Endothelial cell of umbilical vein (primary cell): ENCODE measurements at regions of chr2 and their contacts with region 1.

Region 1: DNA sequence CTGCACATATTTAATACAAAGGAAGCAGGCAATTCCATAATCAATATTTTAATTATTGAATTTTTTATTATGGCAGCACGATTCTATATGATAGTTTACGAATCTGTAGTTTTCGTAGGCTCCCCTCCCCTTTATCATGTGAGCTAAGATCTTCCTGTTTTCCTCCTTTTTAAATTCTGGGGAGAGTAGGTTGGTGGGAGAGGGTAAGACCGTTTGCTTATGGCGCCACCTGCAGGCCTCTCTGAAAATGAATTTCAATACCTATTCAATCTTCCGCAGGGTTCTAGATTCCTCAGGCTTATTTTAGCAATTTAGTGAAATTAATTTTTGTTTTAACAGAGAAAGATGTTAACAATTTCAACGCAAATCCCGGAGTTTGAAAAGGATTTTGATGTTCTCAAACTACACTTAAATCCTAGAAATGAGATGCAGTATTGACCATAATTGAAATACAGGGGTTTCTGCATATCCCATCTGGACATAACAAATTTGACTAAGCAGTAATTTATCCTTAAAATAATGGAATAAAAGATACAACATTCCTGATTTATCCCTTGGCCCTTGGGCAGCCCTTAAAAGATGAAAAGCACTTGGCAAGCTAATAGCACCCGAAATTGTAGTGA is 12.8 kb upstream of the GBX2 start:
- DNase-seq: peak; percentile 88
- H3K4me3 ChIP-seq: peak overlapping the region in 1 of 3 experiments; percentile 65
- H3K27ac ChIP-seq: peak overlapping the region; percentile 99
- H3K4me1 ChIP-seq: peaks cover 24% of the 10 kb centered on the region
- H3K27me3 ChIP-seq: no peaks in the 10 kb centered on the region
- CTCF ChIP-seq: peak; percentile 61 to 65
- POLR2A ChIP-seq: no peak

Region 2: DNA sequence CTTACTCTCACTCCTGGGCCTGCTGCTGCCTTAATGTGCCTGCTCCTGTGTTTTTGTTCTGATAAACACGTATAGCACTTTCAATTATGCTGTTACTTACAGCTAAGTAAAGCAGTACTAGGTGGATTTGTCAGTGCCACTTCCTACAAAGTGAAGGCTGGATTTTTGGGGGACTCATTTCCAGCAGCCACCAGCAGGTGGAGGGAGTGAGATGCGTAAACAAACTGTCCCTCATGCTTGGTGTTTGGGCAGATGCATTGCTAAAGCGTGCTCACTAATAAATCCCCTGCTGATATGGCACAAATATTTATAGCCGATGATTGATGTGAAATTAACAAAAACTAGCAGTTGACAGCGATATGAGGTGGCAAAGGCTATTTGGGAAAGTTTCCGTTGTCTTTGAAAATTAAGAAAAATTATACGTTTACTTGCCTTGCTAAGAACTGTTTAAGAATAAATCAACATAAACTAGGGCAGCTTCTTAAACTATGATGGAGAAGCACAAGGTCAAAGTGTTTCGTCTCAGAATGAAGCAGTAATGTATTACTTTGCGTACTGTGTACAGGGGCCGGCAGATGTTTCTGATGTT is 585.4 kb before region 1 on chr2:
- CTCF ChIA-PET with region 1: no interaction called
- POLR2A ChIA-PET with region 1: no interaction called
- dilution Hi-C with region 1: no loop called
- intact Hi-C with region 1: loop called (anchors 1 kb)
- DNase-seq: peak; percentile 85
- H3K4me3 ChIP-seq: no peak overlapping the region
- H3K27ac ChIP-seq: no peak overlapping the region
- H3K4me1 ChIP-seq: peaks cover 3% of the 10 kb centered on the region
- H3K27me3 ChIP-seq: no peaks in the 10 kb centered on the region
- CTCF ChIP-seq: peak; percentile 83
- POLR2A ChIP-seq: no peak

Region 3: DNA sequence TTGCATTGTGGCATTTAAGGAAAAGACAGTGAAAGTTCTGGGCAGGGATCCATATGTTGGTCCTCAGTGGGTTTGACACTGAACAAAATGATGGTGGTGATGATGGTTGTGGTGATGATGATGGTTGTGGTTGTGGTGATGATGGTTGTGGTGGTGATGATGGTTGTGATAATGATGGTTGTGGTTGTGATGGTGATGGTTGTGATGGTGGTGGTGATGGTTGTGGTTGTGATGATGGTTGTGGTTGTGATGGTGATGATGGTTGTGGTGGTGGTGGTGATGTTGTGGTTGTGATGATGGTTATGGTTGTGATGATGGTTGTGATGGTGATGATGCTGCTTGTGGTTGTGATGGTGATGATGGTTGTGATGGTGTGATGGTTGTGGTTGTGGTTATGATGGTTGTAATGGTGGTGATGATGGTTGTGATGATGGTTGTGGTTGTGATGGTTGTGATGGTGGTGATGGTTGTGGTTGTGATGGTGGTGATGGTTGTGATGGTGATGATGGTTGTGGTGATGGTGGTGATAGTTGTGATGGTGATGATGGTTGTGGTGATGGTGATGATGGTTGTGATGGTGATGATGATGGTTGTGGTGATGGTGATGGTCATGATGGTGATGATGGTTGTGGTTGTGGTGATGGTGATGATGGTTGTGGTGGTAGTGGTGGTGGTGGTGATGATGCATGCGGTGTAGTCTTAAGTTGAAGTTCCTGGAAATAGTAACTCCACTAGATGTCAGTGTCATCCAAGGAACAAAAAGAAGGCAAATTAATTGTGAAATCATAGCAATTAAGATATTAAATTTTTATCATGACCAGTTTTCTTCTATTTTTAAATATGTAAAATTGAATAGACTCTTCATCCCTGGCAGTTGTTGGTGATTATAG is 378.2 kb before region 1 on chr2:
- CTCF ChIA-PET with region 1: interaction called, 22 read pairs
- POLR2A ChIA-PET with region 1: no interaction called
- dilution Hi-C with region 1: no loop called
- intact Hi-C with region 1: loop called (anchors 1 kb)
- DNase-seq: peak; percentile 43
- H3K4me3 ChIP-seq: no peak overlapping the region
- H3K27ac ChIP-seq: no peak overlapping the region
- H3K4me1 ChIP-seq: no peaks in the 10 kb centered on the region
- H3K27me3 ChIP-seq: no peaks in the 10 kb centered on the region
- CTCF ChIP-seq: peak; percentile 9 to 18
- POLR2A ChIP-seq: no peak

Region 4: GRCh38 chr2:235981631-235982030 is 199.3 kb before region 1 on chr2:
- CTCF ChIA-PET with region 1: interaction called, 3 read pairs
- POLR2A ChIA-PET with region 1: no interaction called
- dilution Hi-C with region 1: no loop called
- intact Hi-C with region 1: loop called (anchors 1 kb)
- DNase-seq: peak; percentile 34
- H3K4me3 ChIP-seq: no peak overlapping the region
- H3K27ac ChIP-seq: no peak overlapping the region
- H3K4me1 ChIP-seq: no peaks in the 10 kb centered on the region
- H3K27me3 ChIP-seq: no peaks in the 10 kb centered on the region
- CTCF ChIP-seq: peak in 1 of 2 donors; percentile 34
- POLR2A ChIP-seq: no peak

Region 5: DNA sequence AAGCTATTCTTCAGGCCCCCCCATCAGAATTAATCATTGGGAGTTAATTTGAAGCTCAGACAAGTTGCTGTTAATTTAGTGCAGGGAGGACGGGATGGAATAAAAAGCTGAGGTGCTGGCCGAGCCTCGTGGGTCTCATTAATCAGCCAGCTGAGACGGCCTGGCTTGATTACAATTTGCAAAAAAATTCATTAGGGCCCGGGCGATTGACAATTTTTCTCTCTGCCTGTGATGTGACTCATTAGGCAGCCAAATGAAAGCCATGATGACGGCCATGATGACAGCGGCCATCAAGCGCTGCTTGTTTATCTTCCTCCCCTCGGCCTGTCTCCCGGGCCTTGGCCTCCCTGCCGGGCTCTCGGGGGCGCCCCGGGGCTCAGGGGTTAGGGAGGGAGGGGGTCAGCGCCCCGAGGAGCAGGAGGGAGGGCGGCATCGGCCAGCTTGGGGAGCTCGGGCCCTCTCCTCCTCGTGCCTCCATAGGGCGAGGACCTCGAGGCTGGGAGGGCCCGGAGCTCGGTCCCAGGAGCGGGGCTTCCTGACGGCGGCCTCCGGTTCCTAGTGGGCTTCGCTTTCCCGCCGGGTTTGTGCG is 18.0 kb before region 1 on chr2:
- CTCF ChIA-PET with region 1: interaction called, 61 read pairs
- POLR2A ChIA-PET with region 1: interaction called, 9 read pairs
- dilution Hi-C with region 1: no loop called
- intact Hi-C with region 1: loop called (anchors 1 kb)
- DNase-seq: no peak
- H3K4me3 ChIP-seq: peak overlapping the region in 1 of 3 experiments; percentile 73
- H3K27ac ChIP-seq: no peak overlapping the region
- H3K4me1 ChIP-seq: peaks cover 16% of the 10 kb centered on the region
- H3K27me3 ChIP-seq: peaks cover 0 to 10% of the 10 kb centered on the region in 2 experiments
- CTCF ChIP-seq: no peak
- POLR2A ChIP-seq: peak; percentile 5

Region 6: DNA sequence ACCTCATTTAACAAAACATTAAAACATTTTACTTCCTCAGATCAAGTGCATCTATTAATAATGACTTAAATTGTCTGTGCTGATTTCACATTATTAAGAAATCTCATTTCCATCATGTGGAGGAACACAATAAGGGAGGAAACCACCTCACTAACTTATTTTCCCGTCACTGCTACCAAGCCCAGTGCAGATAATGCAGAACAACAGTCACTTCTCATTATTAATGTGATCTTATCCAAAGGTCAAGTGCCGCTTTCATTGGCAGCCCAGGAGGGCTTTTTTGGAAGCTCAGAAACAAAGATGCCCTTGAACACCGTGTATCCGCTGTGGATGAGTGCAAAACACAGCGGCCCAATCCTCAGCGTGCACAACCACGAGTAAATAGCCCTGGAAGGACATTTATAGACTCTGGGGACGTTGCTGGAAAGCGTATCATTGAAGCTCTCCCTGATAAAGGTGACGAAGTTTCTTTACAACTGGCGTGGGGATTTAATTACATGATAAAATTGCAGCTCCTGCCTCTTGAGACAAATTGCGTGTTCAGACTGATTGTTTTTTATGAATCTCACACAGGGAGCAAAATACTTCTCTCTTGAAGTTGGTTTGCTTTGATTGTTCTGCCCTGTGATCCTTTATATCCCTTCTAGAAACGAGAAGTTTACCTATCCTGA is 70.1 kb after region 1 on chr2:
- CTCF ChIA-PET with region 1: interaction called, 4 read pairs
- POLR2A ChIA-PET with region 1: no interaction called
- dilution Hi-C with region 1: no loop called
- intact Hi-C with region 1: loop called (anchors 1 kb)
- DNase-seq: peak; percentile 83
- H3K4me3 ChIP-seq: no peak overlapping the region
- H3K27ac ChIP-seq: no peak overlapping the region
- H3K4me1 ChIP-seq: peaks cover 16% of the 10 kb centered on the region
- H3K27me3 ChIP-seq: no peaks in the 10 kb centered on the region
- CTCF ChIP-seq: no peak
- POLR2A ChIP-seq: no peak